ENCODE measurements at regions of chr15 and their contacts with region 1.

Region 1: GRCh38 chr15:35444557-35445204 is 101.3 kb downstream of the DPH6 start:
- DNase-seq: peak; percentile 28 to 60 (median 38)
- ATAC-seq: peak; percentile 65
- H3K4me3 ChIP-seq: no peak overlapping the region
- H3K27ac ChIP-seq: no peak overlapping the region
- H3K4me1 ChIP-seq: no peaks in the 10 kb centered on the region
- H3K27me3 ChIP-seq: no peaks in the 10 kb centered on the region
- CTCF ChIP-seq: peak; percentile 73 to 92 (median 77)
- EP300 ChIP-seq: no peak
- POLR2A ChIP-seq: no peak
- RAD21 ChIP-seq: peak; percentile 90 to 92

Region 2: DNA sequence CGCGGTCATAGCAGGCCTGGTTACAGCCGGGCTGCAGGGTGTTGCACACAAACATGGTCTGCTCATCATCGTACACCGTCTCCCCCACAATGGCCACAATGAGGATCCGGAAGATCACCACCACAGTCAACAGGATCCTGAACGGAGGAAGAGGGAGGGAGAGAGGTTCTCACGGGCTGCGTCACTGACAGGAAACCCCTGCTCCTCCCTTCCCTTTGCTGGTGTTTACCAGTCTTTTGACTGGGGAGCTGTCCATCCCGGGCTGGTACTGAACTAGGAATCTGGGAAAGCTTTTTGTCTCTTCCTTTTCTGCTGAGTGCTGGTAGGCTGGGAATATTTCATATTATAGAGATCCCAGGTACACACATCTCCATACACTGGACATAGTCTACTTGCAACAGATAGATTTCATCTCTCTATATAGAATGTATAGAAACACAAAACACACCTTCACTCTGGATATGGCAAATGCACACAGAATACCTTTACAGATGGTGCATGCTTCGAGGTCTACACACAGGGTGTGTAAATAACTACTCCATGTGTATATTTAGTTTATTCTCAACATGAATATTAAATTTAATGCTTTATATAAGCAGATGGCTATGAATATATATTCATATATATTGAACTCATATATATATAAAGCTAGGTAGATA is 691.3 kb before region 1 on chr15:
- CTCF ChIA-PET with region 1: no interaction called
- POLR2A ChIA-PET with region 1: no interaction called
- in situ Hi-C with region 1: no loop called
- intact Hi-C with region 1: no loop called
- DNase-seq: peak; percentile 45 to 54 (median 50)
- ATAC-seq: peak; percentile 81
- H3K4me3 ChIP-seq: no peak overlapping the region
- H3K27ac ChIP-seq: no peak overlapping the region
- H3K4me1 ChIP-seq: peaks cover 0 to 12% of the 10 kb centered on the region in 2 experiments; a peak in 2 of 5 replicates
- H3K27me3 ChIP-seq: peaks cover 26 to 40% of the 10 kb centered on the region in 2 experiments
- CTCF ChIP-seq: no peak
- EP300 ChIP-seq: no peak
- POLR2A ChIP-seq: no peak
- RAD21 ChIP-seq: no peak

Region 3: GRCh38 chr15:35078221-35078915 is 366.3 kb before region 1 on chr15:
- CTCF ChIA-PET with region 1: interaction called, 31 read pairs
- POLR2A ChIA-PET with region 1: no interaction called
- in situ Hi-C with region 1: loop called (anchors 10 kb)
- intact Hi-C with region 1: loop called (anchors 1 kb)
- DNase-seq: peak; percentile 50 to 74 (median 61)
- ATAC-seq: peak; percentile 84
- H3K4me3 ChIP-seq: no peak overlapping the region
- H3K27ac ChIP-seq: no peak overlapping the region
- H3K4me1 ChIP-seq: no peaks in the 10 kb centered on the region
- H3K27me3 ChIP-seq: no peaks in the 10 kb centered on the region
- CTCF ChIP-seq: peak; percentile 72 to 93 (median 76)
- EP300 ChIP-seq: no peak
- POLR2A ChIP-seq: no peak
- RAD21 ChIP-seq: peak; percentile 92 to 96

Region 4: GRCh38 chr15:35299059-35299735 is 145.5 kb before region 1 on chr15:
- CTCF ChIA-PET with region 1: no interaction called
- POLR2A ChIA-PET with region 1: no interaction called
- in situ Hi-C with region 1: loop called (anchors 5 kb)
- intact Hi-C with region 1: no loop called
- DNase-seq: no peak
- ATAC-seq: no peak
- H3K4me3 ChIP-seq: no peak overlapping the region
- H3K27ac ChIP-seq: no peak overlapping the region
- H3K4me1 ChIP-seq: no peaks in the 10 kb centered on the region; a peak in 1 of 5 replicates
- H3K27me3 ChIP-seq: no peaks in the 10 kb centered on the region
- CTCF ChIP-seq: no peak
- EP300 ChIP-seq: no peak
- POLR2A ChIP-seq: no peak
- RAD21 ChIP-seq: no peak

Region 5: DNA sequence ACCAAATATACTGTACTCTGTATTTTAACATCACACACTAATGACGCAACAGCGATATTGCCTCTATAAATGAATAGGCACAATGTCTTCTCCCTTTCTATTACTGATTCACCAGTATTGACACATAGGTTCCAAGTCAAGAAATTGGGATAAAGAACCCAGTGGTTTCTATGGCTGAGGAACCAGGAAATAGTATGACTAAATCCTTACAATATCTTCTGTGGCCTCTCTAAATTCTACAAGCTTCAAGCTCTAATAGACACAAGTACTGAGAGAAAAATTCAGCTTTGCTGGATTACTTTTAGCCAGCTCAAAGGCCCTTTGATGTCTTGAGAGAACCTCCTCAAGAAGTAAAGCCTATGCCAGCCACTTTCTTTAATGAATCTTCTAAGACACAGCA is 61.2 kb before region 1 on chr15:
- CTCF ChIA-PET with region 1: no interaction called
- POLR2A ChIA-PET with region 1: no interaction called
- in situ Hi-C with region 1: no loop called
- intact Hi-C with region 1: no loop called
- DNase-seq: no peak
- ATAC-seq: no peak
- H3K4me3 ChIP-seq: no peak overlapping the region
- H3K27ac ChIP-seq: no peak overlapping the region
- H3K4me1 ChIP-seq: no peaks in the 10 kb centered on the region
- H3K27me3 ChIP-seq: no peaks in the 10 kb centered on the region
- CTCF ChIP-seq: no peak
- EP300 ChIP-seq: no peak
- POLR2A ChIP-seq: no peak
- RAD21 ChIP-seq: no peak

Region 6: DNA sequence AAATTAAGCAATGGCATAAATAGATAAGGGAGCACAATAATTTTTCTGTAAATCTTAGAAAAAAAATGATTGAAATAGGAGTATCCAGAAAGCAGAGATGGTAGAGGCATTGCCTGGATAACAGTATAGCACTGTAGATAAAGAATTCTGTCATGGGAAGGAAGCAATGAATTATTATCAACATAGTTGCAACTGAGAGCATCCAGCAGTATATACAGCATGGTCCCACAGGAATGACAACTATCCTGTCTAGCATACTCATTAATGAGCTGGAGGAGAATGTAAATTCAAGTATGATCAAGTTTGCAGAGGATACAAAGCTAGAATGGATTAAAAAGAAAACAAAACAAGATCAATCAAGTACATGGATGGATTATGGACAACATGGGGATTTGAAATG is 10.5 kb after region 1 on chr15:
- CTCF ChIA-PET with region 1: no interaction called
- POLR2A ChIA-PET with region 1: no interaction called
- in situ Hi-C with region 1: no loop called
- intact Hi-C with region 1: no loop called
- DNase-seq: no peak
- ATAC-seq: no peak
- H3K4me3 ChIP-seq: no peak overlapping the region
- H3K27ac ChIP-seq: no peak overlapping the region
- H3K4me1 ChIP-seq: no peaks in the 10 kb centered on the region
- H3K27me3 ChIP-seq: no peaks in the 10 kb centered on the region
- CTCF ChIP-seq: no peak
- EP300 ChIP-seq: no peak
- POLR2A ChIP-seq: no peak
- RAD21 ChIP-seq: no peak

Measured in K562 (cell line).